ENCODE measurements at regions of chr5 and their contacts with region 1.

Region 1: GRCh38 chr5:94740286-94740685 is 121.8 kb downstream of the SLF1 start:
- DNase-seq: no peak
- H3K4me3 Mint-ChIP-seq: no peak overlapping the region
- H3K27ac Mint-ChIP-seq: no peak overlapping the region
- H3K4me1 Mint-ChIP-seq: no peaks in the 10 kb centered on the region
- H3K27me3 Mint-ChIP-seq: peaks cover 5% of the 10 kb centered on the region

Region 2: GRCh38 chr5:93800988-93801811 is 939.1 kb before region 1 on chr5:
- CTCF ChIA-PET with region 1: no interaction called
- intact Hi-C with region 1: loop called (anchors 5 kb)
- DNase-seq: peak; percentile 34
- H3K4me3 Mint-ChIP-seq: no peak overlapping the region
- H3K27ac Mint-ChIP-seq: no peak overlapping the region
- H3K4me1 Mint-ChIP-seq: peaks cover 2% of the 10 kb centered on the region
- H3K27me3 Mint-ChIP-seq: no peaks in the 10 kb centered on the region

Region 3: DNA sequence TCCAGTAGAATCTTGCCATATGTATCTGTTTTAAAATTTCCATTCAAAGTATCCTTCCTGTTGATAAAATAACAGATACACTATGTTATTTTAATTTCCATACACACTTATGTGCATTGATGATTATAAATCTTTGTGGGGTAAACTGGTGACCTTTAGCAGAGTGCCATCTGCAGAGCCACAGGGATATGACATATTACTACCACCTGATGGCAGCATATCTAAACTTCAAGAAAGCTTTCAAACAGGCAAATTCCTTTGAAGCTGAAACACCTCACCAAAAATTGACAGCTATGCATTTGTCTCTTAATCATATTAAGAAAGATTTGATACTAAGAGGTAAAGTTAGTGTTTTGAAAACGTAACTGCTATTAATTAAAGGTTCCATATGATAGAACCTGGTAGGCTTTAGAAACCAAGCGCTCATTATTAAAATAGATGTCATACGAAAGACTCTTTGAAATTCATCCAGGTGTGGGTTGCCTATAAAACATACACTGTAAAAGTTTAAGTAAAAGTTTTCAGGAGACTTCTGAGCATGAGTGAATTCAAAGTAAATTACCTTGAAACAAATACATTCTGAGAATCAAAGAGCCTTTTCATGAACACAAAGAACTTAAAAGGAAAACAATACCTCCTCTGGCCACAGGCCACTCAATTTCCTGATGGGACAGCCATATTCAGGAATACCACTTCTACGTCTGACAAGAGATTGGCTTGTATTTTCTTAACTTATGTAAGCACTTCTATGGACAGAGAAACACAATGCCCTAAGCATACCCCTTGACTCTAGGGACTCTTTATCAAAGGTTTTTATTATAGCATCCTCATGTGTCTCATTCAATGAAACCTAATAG is 215.2 kb before region 1 on chr5:
- CTCF ChIA-PET with region 1: interaction called, 29 read pairs
- intact Hi-C with region 1: loop called (anchors 1 kb)
- DNase-seq: peak; percentile 22
- H3K4me3 Mint-ChIP-seq: no peak overlapping the region
- H3K27ac Mint-ChIP-seq: no peak overlapping the region
- H3K4me1 Mint-ChIP-seq: no peaks in the 10 kb centered on the region
- H3K27me3 Mint-ChIP-seq: no peaks in the 10 kb centered on the region

Region 4: DNA sequence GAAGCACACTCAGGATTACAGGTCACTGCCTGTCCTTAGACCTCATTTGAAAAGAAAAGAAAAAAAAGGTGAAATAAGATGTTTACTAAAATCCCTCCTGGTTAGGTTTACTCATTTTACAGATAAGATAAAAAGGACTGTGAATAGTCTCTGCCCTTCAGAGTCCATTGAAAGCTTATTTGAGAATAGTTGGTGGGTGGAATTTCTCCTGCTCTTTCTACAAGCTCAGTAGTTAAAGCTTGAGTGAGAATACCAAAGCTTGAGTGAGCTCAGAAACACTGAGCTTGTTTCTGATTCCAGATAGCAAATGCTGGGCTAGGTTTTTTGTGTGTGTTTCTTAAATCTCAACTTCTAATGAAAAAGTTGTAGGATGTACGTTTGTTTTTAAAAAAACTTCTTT is 15.1 kb before region 1 on chr5:
- CTCF ChIA-PET with region 1: interaction called, 11 read pairs
- intact Hi-C with region 1: no loop called
- DNase-seq: no peak
- H3K4me3 Mint-ChIP-seq: no peak overlapping the region
- H3K27ac Mint-ChIP-seq: no peak overlapping the region
- H3K4me1 Mint-ChIP-seq: no peaks in the 10 kb centered on the region
- H3K27me3 Mint-ChIP-seq: peaks cover 5% of the 10 kb centered on the region

Region 5: GRCh38 chr5:94849821-94850736 is 109.8 kb after region 1 on chr5:
- CTCF ChIA-PET with region 1: interaction called, 8 read pairs
- intact Hi-C with region 1: loop called (anchors 1 kb)
- DNase-seq: peak; percentile 40
- H3K4me3 Mint-ChIP-seq: no peak overlapping the region
- H3K27ac Mint-ChIP-seq: no peak overlapping the region
- H3K4me1 Mint-ChIP-seq: peaks cover 3% of the 10 kb centered on the region
- H3K27me3 Mint-ChIP-seq: peaks cover 6% of the 10 kb centered on the region

Measured in activated naive CD4-positive, alpha-beta T cell treated with anti-CD3 and anti-CD28 coated beads for 36 hours (primary cell).